Testis (tissue), 5 donors: ENCODE measurements at regions of chr16 and their contacts with region 1.

Region 1: GRCh38 chr16:48054881-48055601 is 100.8 kb downstream of the ABCC12 start:
- DNase-seq: peak; percentile 73
- H3K4me3 ChIP-seq: peak overlapping the region in 1 of 2 donors; percentile 4
- H3K27ac ChIP-seq: peak overlapping the region in 1 of 2 donors; percentile 33
- H3K4me1 ChIP-seq: peaks cover 26% of the 10 kb centered on the region
- H3K27me3 ChIP-seq: no peaks in the 10 kb centered on the region
- CTCF ChIP-seq: peak; percentile 50 to 83 (median 70)
- POLR2A ChIP-seq: no peak

Region 2: DNA sequence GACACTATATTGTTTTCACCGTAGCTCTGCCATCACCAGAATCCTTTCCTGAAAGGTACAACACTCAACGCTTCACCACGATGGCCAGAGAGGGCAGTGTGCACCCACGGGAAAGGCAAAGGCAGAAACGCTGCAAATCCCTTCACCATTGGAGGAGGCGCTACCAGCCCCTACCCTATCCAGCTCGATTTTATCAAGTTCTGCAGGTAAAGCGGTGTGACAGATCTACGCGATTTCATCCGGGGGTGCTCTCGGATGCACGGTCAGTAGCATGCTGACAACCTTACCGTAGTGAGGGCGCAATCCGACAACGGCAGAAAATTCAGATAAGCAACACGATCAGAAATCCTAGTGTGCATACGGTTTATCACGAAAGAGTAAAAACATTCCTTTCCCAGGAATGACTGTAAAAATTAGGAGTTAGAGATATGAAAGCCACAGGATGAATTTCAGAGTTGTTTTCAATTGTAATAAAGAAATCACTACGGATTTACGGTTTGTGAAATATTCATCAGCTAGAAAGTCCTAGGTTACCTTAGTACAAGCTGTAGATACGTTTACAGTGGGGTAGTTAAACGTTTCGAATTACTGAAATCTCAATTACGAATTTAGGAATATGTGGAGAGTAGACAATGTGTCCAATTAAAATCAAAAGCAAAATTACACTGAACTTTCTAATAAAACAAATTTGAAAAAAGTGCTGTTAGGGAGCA is 913.1 kb before region 1 on chr16:
- intact Hi-C with region 1: loop called (anchors 10 kb)
- DNase-seq: peak; percentile 88
- H3K4me3 ChIP-seq: peak overlapping the region; percentile 60 to 67
- H3K27ac ChIP-seq: no peak overlapping the region
- H3K4me1 ChIP-seq: no peaks in the 10 kb centered on the region
- H3K27me3 ChIP-seq: no peaks in the 10 kb centered on the region
- CTCF ChIP-seq: peak; percentile 46 to 78 (median 71)
- POLR2A ChIP-seq: no peak